CD4-positive, alpha-beta memory T cell (primary cell): ENCODE measurements at regions of chr2 and their contacts with region 1.

Region 1: GRCh38 chr2:196233021-196233804 is 61.8 kb upstream of the STK17B start:
- DNase-seq: no peak
- H3K4me3 ChIP-seq: no peak overlapping the region
- H3K4me3 Mint-ChIP-seq: peak overlapping the region in 6 of 8 donors; percentile 21 to 41 (median 32)
- H3K27ac ChIP-seq: peak overlapping the region; percentile 33
- H3K27ac Mint-ChIP-seq: peak overlapping the region; percentile 83 to 99 (median 93)
- H3K4me1 ChIP-seq: peaks cover 96% of the 10 kb centered on the region
- H3K4me1 Mint-ChIP-seq: peaks cover 65 to 97% (median 79%) of the 10 kb centered on the region in 4 donors
- H3K27me3 ChIP-seq: no peaks in the 10 kb centered on the region
- H3K27me3 Mint-ChIP-seq: no peaks in the 10 kb centered on the region

Region 2: GRCh38 chr2:196101325-196101991 is 131.8 kb before region 1 on chr2:
- CTCF ChIA-PET with region 1: no interaction called
- POLR2A ChIA-PET with region 1: no interaction called
- intact Hi-C with region 1: no loop called
- DNase-seq: no peak
- H3K4me3 ChIP-seq: no peak overlapping the region
- H3K4me3 Mint-ChIP-seq: no peak overlapping the region
- H3K27ac ChIP-seq: no peak overlapping the region
- H3K27ac Mint-ChIP-seq: peak overlapping the region in 1 of 7 donors; percentile 36
- H3K4me1 ChIP-seq: peaks cover 8% of the 10 kb centered on the region
- H3K4me1 Mint-ChIP-seq: peaks cover 10 to 17% (median 13%) of the 10 kb centered on the region in 4 donors
- H3K27me3 ChIP-seq: no peaks in the 10 kb centered on the region
- H3K27me3 Mint-ChIP-seq: no peaks in the 10 kb centered on the region

Region 3: GRCh38 chr2:196182439-196183171 is 50.6 kb before region 1 on chr2:
- CTCF ChIA-PET with region 1: interaction called, 4 read pairs
- POLR2A ChIA-PET with region 1: interaction called, 90 read pairs
- intact Hi-C with region 1: no loop called
- DNase-seq: peak in 1 of 5 donors; percentile 53
- H3K4me3 ChIP-seq: peak overlapping the region; percentile 2 to 7
- H3K4me3 Mint-ChIP-seq: peak overlapping the region; percentile 64 to 85 (median 74)
- H3K27ac ChIP-seq: peak overlapping the region; percentile 55
- H3K27ac Mint-ChIP-seq: peak overlapping the region; percentile 91 to 98 (median 95)
- H3K4me1 ChIP-seq: peaks cover 92% of the 10 kb centered on the region
- H3K4me1 Mint-ChIP-seq: peaks cover 65 to 93% (median 80%) of the 10 kb centered on the region in 4 donors
- H3K27me3 ChIP-seq: no peaks in the 10 kb centered on the region
- H3K27me3 Mint-ChIP-seq: no peaks in the 10 kb centered on the region

Region 4: DNA sequence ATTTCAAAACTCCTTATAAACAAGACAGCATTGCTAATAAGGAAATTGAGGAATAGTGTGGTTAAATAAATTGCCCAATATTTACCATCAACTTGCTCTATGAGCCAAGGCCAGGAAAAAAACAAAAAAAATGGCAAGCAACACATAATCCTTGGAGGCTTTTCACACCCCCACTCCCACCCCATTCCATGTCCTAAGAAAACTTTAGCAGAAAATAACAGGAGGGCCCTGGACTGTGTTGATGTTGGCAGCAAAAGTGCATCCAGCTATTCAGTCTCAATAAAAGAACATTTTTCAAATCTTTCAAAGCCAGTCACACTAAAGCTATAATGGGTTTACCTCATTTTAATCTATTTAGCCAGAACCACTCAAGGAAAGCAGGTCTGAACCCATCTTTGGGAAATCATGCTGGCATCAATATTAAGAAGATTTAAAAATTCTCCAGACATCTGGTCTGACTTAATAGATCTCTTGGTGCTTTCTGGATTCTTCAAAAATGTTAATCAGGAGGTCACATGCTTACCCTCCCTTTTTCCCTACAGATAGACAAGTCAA is 27.3 kb before region 1 on chr2:
- CTCF ChIA-PET with region 1: no interaction called
- POLR2A ChIA-PET with region 1: interaction called, 31 read pairs
- intact Hi-C with region 1: no loop called
- DNase-seq: no peak
- H3K4me3 ChIP-seq: no peak overlapping the region
- H3K4me3 Mint-ChIP-seq: no peak overlapping the region
- H3K27ac ChIP-seq: no peak overlapping the region
- H3K27ac Mint-ChIP-seq: peak overlapping the region in 3 of 7 donors; percentile 14 to 85 (median 24)
- H3K4me1 ChIP-seq: peaks cover 53% of the 10 kb centered on the region
- H3K4me1 Mint-ChIP-seq: peaks cover 46 to 55% (median 49%) of the 10 kb centered on the region in 4 donors
- H3K27me3 ChIP-seq: no peaks in the 10 kb centered on the region
- H3K27me3 Mint-ChIP-seq: no peaks in the 10 kb centered on the region

Region 5: DNA sequence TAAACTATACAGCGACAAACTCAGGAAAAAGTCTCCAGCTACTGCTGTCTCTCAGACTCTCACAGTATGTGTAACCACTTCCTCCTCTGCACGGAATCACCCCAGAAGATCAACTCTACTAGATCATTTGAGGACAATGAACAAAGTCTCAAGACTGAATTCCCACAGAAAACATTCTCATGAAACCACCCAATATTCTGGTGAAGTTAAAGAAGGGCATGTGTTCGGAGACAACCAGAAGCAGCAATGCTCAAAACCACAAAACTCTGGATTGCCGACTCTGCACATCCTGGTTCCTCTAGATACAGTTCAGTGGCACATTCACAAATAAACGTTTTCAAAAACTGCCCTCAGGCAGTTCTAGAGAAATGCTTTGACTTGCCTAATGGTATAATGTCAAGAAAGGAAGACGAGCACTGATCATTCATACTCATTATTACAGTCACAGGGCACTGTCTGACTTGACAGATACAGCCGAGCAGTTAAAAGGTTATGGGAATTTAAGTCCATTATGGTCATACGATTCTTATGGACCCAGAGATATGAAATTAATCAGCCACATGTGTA is 30.1 kb after region 1 on chr2:
- CTCF ChIA-PET with region 1: interaction called, 60 read pairs
- POLR2A ChIA-PET with region 1: interaction called, 83 read pairs
- intact Hi-C with region 1: loop called (anchors 5 kb)
- DNase-seq: peak; percentile 72 to 82 (median 78)
- H3K4me3 ChIP-seq: peak overlapping the region in 1 of 2 donors; percentile 33
- H3K4me3 Mint-ChIP-seq: peak overlapping the region; percentile 63 to 91 (median 79)
- H3K27ac ChIP-seq: peak overlapping the region; percentile 78
- H3K27ac Mint-ChIP-seq: peak overlapping the region; percentile 85 to 99 (median 97)
- H3K4me1 ChIP-seq: peaks cover 93% of the 10 kb centered on the region
- H3K4me1 Mint-ChIP-seq: peaks cover 59 to 83% (median 71%) of the 10 kb centered on the region in 4 donors
- H3K27me3 ChIP-seq: no peaks in the 10 kb centered on the region
- H3K27me3 Mint-ChIP-seq: no peaks in the 10 kb centered on the region